Caco-2 (cell line): ENCODE measurements at regions of chr1 and their contacts with region 1.

Region 1: GRCh38 chr1:218339267-218339831 is 5.8 kb upstream of the TGFB2 start:
- DNase-seq: peak in 1 of 2 experiments; percentile 30
- H3K4me3 ChIP-seq: no peak overlapping the region
- H3K4me3 Mint-ChIP-seq: no peak overlapping the region
- H3K27ac Mint-ChIP-seq: no peak overlapping the region
- H3K4me1 ChIP-seq: peaks cover 12% of the 10 kb centered on the region
- H3K4me1 Mint-ChIP-seq: no peaks in the 10 kb centered on the region
- H3K27me3 ChIP-seq: no peaks in the 10 kb centered on the region
- H3K27me3 Mint-ChIP-seq: no peaks in the 10 kb centered on the region
- CTCF ChIP-seq: peak; percentile 63 to 72

Region 2: GRCh38 chr1:218546309-218546708 is 207.0 kb after region 1 on chr1:
- CTCF ChIA-PET with region 1: no interaction called
- POLR2A ChIA-PET with region 1: no interaction called
- intact Hi-C with region 1: loop called (anchors 1 kb)
- DNase-seq: peak in 1 of 2 experiments; percentile 36
- H3K4me3 ChIP-seq: no peak overlapping the region
- H3K4me3 Mint-ChIP-seq: no peak overlapping the region
- H3K27ac Mint-ChIP-seq: no peak overlapping the region
- H3K4me1 ChIP-seq: no peaks in the 10 kb centered on the region
- H3K4me1 Mint-ChIP-seq: no peaks in the 10 kb centered on the region
- H3K27me3 ChIP-seq: no peaks in the 10 kb centered on the region
- H3K27me3 Mint-ChIP-seq: no peaks in the 10 kb centered on the region
- CTCF ChIP-seq: peak in 1 of 2 experiments; percentile 33

Region 3: DNA sequence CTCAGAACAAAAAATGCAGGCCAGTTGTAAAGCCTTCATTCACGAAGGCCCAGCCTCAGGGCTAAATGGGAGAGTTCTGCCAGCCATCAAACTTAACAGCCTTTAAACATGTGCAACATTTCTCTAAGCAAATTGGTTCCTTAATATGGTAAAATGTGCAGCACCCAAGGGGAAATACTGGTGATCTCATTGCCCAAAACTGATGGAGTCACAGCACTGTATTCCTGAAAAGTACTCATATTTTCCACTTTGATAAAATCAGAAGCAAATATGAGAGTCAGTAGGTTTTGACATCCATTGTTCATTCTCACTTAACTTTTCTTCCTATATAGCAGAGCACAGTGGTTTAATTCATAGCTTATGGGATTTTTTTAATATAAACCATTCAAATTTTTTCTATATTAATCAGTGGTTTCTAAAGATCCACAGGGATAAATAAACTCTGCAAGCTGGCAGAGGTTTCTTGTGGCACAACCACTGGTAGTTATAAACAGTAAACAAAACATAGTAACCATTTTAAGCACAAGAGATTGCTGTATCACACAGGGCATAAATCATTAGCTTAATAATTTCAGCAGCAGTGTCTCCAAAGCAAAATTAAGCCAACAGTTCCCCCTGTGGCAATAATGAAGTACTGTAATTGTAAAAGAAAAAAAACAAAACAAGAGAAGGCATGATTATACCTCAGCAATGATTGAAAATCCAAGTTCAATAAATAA is 727.4 kb after region 1 on chr1:
- CTCF ChIA-PET with region 1: interaction called, 4 read pairs
- POLR2A ChIA-PET with region 1: no interaction called
- intact Hi-C with region 1: loop called (anchors 1 kb)
- DNase-seq: no peak
- H3K4me3 ChIP-seq: no peak overlapping the region
- H3K4me3 Mint-ChIP-seq: no peak overlapping the region
- H3K27ac Mint-ChIP-seq: no peak overlapping the region
- H3K4me1 ChIP-seq: no peaks in the 10 kb centered on the region
- H3K4me1 Mint-ChIP-seq: no peaks in the 10 kb centered on the region
- H3K27me3 ChIP-seq: no peaks in the 10 kb centered on the region
- H3K27me3 Mint-ChIP-seq: no peaks in the 10 kb centered on the region
- CTCF ChIP-seq: peak; percentile 30 to 38

Region 4: GRCh38 chr1:219566951-219567947 is 1227.9 kb after region 1 on chr1:
- CTCF ChIA-PET with region 1: interaction called, 4 read pairs
- POLR2A ChIA-PET with region 1: no interaction called
- intact Hi-C with region 1: loop called (anchors 5 kb)
- DNase-seq: peak in 1 of 2 experiments; percentile 20
- H3K4me3 ChIP-seq: no peak overlapping the region
- H3K4me3 Mint-ChIP-seq: no peak overlapping the region
- H3K27ac Mint-ChIP-seq: no peak overlapping the region
- H3K4me1 ChIP-seq: no peaks in the 10 kb centered on the region
- H3K4me1 Mint-ChIP-seq: no peaks in the 10 kb centered on the region
- H3K27me3 ChIP-seq: no peaks in the 10 kb centered on the region
- H3K27me3 Mint-ChIP-seq: peaks cover 3% of the 10 kb centered on the region
- CTCF ChIP-seq: peak; percentile 48 to 75